GM23248 (cell line): ENCODE measurements at regions of chr16 and their contacts with region 1.

Region 1: DNA sequence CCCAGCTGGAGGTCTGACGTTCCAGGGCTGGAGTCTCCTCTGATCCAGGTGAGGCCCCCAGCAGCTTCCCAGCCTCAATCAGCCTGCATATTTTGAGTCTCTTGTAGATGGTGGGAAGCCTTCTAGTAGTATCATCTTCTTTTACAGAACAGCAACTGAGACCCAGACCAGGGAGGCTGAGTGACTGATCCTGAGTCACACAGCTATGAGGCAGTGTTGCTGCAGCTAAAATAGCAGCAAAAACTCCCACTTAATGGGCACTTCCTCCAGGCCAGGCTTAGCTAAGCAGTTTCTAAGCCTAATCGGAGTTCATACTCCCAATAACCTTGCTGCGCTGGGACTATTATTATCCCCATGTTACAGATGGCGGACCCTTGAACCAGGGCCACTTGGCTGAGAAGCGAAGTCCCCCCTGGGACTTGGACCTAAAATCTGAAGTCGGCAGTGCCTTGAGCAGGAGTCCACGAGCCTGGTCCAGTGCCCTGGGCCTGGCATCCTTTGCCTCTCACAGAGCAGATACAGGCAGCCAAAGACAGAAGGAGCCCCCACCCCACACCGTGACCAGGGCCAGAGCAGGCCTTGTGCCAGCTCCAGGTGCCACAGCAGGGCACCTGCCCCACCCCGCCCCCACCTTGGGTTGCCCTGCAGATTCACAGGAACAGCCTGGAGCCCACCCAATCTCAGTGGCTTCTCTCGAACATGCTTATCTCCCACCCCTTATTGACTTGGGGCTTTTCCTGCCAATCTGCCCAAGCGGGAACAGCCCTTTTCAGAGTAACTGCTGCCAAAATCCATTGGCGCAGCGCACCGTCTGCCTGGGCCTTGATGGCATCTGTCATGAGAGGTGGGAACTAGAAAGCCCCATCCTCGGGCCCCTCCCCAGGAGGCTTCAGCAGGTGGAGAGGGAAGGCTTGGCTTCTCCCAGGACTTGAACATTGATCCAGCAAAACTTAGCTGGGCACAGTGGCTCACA is 65.1 kb downstream of the SOCS1 start:
- DNase-seq: peak; percentile 79
- H3K4me3 ChIP-seq: no peak overlapping the region
- H3K27ac ChIP-seq: no peak overlapping the region
- H3K4me1 ChIP-seq: peaks cover 7% of the 10 kb centered on the region
- H3K27me3 ChIP-seq: no peaks in the 10 kb centered on the region

Region 2: DNA sequence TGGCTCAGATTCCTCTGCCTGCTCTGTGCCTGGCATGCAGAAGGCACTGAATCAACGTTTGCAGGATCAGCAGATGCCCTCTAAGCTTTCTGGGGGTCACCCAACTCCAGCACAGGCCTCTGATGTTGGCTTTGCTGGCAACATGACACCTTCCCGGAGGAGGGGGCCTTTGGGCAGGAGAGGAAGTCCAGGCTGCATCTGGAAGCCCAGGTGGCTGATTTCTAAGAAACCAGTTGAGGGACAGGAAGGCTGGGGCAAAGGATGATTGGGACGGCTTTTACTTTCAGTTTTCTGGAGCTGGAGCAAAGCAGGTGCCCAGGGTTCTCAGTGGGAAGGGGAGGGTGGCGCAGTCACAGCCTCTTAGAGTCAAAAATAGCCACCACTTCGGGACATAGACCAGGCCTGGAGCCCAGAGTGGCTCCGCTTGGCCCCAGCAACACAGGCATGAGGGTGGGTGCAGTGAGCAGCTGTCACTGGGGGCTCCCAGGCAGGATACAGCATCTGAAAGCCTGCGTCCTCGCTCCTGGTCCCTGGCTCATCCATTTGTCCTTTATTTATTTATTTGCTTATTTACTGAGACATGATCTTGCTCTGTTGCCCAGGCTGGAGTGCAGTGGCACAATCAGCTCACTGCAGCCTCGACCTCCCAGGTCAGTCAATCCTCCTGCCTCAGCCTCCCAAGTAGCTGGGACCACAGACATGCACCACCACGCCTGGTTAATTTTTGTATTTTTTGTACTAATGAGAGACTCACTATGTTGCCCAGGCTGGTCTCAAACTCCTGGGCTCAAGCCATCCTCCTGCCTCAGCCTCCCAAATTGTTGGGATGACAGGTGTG is 50.0 kb after region 1 on chr16:
- in situ Hi-C with region 1: loop called (anchors 5 kb)
- DNase-seq: no peak
- H3K4me3 ChIP-seq: no peak overlapping the region
- H3K27ac ChIP-seq: no peak overlapping the region
- H3K4me1 ChIP-seq: no peaks in the 10 kb centered on the region
- H3K27me3 ChIP-seq: 0 out of 2 replicates have a peak, but pooled peaks cover 4% of the 10 kb centered on the region